Heart left ventricle (tissue), 16 donors: ENCODE measurements at regions of chr6 and their contacts with region 1.

Region 1: DNA sequence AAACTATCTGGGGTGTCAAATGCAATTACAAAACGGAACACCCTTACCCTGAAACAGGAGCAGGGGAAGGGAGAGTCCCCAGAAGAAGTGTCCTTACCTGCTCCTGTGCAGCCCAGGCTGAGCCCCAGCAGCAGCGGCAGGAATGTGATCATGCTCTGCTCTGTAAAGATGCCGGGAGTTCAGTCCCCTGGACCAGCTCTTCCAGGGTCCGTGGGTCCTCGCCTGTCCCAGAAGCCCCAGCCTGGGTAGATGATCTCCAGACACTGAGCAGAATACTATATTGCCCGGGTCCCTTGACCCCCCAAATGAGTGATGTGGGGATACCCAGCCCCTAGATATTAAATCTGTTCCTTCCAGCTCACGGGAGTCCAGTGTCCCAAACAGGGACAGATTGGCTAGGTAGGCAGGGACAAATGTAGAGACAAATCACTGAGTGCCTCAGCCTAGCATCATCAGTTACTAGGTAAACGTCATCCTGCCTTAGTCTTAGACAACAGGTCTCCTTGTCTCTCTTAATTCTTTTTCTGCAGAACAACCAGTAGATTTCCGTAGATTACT is at the start of gene HLA-DMB:
- DNase-seq: peak in 3 of 5 donors; percentile 37 to 80 (median 67)
- ATAC-seq: peak; percentile 92 to 97 (median 96)
- H3K4me3 ChIP-seq: peak within 1 kb of the TSS; percentile 22 to 75 (median 56)
- H3K27ac ChIP-seq: peak within 1 kb of the TSS; percentile 52 to 97 (median 86)
- H3K4me1 ChIP-seq: peaks cover 0 to 94% (median 11%) of the 10 kb centered on the region in 12 donors
- H3K27me3 ChIP-seq: no peaks in the 10 kb centered on the region
- CTCF ChIP-seq: no peak
- POLR2A ChIP-seq: peak in 1 of 2 donors; percentile 22
- total RNA-seq, gene HLA-DMB: 2.7 to 127 (median 9.3) TPM

Region 2: DNA sequence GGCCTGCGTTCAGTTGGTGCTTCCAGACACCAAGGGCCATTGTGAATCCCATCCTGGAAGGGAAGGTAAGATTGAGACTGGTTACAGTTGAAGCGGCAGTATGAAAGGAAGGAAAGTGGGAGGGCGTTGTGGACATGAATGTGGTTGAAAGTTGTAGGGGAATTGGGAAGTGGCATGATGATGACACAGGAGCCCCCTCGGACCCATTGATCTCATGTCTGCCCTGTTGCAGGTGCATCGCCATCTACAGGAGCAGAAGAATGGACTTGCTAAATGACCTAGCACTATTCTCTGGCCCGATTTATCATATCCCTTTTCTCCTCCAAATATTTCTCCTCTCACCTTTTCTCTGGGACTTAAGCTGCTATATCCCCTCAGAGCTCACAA is 298.0 kb before region 1 on chr6:
- intact Hi-C with region 1: no loop called
- DNase-seq: no peak
- ATAC-seq: no peak
- H3K4me3 ChIP-seq: no peak overlapping the region
- H3K27ac ChIP-seq: no peak overlapping the region
- H3K4me1 ChIP-seq: no peaks in the 10 kb centered on the region
- H3K27me3 ChIP-seq: no peaks in the 10 kb centered on the region
- CTCF ChIP-seq: no peak
- POLR2A ChIP-seq: no peak

Region 3: DNA sequence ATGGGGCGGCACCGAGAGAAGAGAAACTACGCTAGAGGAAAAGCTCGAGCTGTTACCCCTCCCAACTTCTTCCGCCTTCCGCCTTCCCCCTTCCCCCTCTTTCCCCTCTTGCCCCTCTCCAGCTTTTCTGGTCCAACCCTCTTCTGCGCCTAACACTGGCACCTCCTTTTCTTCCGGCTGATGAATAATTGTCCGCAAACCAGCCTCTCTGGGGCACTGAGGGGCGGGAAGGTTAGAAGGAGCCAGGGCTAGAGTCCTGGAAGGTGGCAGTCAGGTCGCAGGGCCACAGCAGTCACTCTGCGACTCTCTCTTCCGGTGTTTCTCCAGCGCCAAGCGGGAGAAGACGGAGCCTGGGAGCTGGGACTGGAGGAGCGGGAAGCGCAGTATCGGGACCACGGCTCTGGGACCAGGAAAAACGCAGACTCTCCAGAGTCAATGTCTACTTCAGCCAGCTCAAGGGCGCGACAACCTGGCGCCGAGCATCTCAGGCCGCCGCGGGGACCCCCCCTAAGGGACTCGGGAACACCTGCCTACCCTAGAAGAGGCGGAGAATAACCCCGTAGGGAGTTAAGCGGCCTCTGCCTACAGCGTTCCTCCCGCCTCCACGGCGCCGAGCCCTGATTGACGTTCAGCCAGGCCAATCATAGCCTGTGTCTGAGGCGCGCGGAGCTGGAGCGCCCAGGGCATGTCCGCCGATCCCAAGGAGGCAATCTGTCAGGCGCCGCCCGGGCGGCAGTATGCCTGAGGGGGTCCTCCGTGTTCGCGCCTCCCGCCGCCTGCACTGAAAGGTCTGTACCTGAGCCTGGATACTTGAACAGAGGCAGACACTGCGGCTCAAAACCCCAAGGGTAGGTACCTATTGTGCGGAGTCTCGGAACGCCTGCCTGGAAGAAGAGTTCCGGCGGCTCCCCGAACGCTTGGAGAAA is 46.4 kb before region 1 on chr6:
- intact Hi-C with region 1: loop called in 1 of 10 experiments (anchors 10 kb)
- DNase-seq: peak; percentile 93 to 97 (median 95)
- ATAC-seq: peak; percentile 99 to 100 (median 100)
- H3K4me3 ChIP-seq: peak overlapping the region; percentile 47 to 94 (median 75)
- H3K27ac ChIP-seq: peak overlapping the region; percentile 78 to 94 (median 90)
- H3K4me1 ChIP-seq: peaks cover 0 to 20% (median 6%) of the 10 kb centered on the region in 12 donors
- H3K27me3 ChIP-seq: no peaks in the 10 kb centered on the region
- CTCF ChIP-seq: peak in 2 of 12 donors; percentile 12 to 22
- POLR2A ChIP-seq: peak; percentile 17 to 76

Region 4: GRCh38 chr6:32952817-32953739 is 12.3 kb after region 1 on chr6 and contains the start of gene HLA-DMA:
- intact Hi-C with region 1: loop called in 2 of 10 experiments (anchors 1 to 2 kb)
- DNase-seq: peak; percentile 82 to 89 (median 87)
- ATAC-seq: peak; percentile 99 to 100 (median 100)
- H3K4me3 ChIP-seq: peak within 1 kb of the TSS; percentile 11 to 63 (median 43)
- H3K27ac ChIP-seq: peak within 1 kb of the TSS; percentile 34 to 94 (median 78)
- H3K4me1 ChIP-seq: peaks cover 0 to 71% (median 5%) of the 10 kb centered on the region in 12 donors
- H3K27me3 ChIP-seq: no peaks in the 10 kb centered on the region
- CTCF ChIP-seq: peak; percentile 65 to 93 (median 81)
- POLR2A ChIP-seq: peak in 1 of 2 donors; percentile 73
- total RNA-seq, gene HLA-DMA: 5.4 to 150 (median 16.2) TPM